ENCODE measurements at regions of chr10 and their contacts with region 1.

Region 1: DNA sequence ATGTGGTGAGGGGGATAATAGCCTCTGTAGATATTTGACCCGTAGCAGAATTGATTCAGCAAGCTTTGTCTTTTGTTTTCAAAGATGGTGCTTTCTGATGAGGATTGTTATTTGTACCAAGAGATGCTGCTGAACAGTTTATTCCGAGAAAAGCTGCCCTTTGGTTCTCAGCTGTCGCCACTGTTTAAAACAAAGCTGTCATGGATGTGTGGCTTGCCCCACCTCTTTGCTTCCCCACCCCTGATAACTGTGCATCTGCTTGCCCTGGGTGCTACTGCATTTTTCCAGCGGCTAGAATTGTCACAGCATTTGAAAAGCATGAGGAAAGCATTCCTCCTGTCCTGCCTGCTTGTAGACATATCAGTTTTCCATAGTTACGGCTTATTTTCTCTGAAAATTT is 226.9 kb upstream of the CSTF2T start:
- DNase-seq: no peak
- H3K4me3 ChIP-seq: no peak overlapping the region
- H3K4me3 Mint-ChIP-seq: no peak overlapping the region
- H3K27ac ChIP-seq: no peak overlapping the region
- H3K27ac Mint-ChIP-seq: no peak overlapping the region
- H3K4me1 ChIP-seq: no peaks in the 10 kb centered on the region
- H3K4me1 Mint-ChIP-seq: no peaks in the 10 kb centered on the region
- H3K27me3 ChIP-seq: no peaks in the 10 kb centered on the region
- H3K27me3 Mint-ChIP-seq: no peaks in the 10 kb centered on the region

Region 2: DNA sequence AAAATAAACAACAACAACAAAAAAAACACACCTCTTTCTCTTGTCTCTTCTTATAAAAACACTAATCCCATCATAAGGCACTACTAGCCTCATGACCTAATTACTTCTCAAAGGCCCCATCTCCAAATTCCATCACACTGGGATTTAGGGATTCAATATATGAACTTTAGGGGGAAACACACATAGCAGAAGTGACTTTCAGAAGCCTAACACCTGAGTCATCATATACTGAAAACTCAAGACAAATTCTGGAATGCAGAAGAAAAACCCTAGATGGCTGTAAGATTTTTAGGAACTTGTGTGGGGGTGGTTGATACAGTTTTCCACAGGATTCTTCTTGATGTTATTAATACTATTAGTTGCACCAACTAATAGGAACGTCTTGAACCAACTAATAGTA is 193.3 kb before region 1 on chr10:
- CTCF ChIA-PET with region 1: no interaction called
- POLR2A ChIA-PET with region 1: interaction called, 13 read pairs
- DNase-seq: no peak
- H3K4me3 ChIP-seq: no peak overlapping the region
- H3K4me3 Mint-ChIP-seq: no peak overlapping the region
- H3K27ac ChIP-seq: no peak overlapping the region
- H3K27ac Mint-ChIP-seq: no peak overlapping the region
- H3K4me1 ChIP-seq: no peaks in the 10 kb centered on the region
- H3K4me1 Mint-ChIP-seq: no peaks in the 10 kb centered on the region
- H3K27me3 ChIP-seq: no peaks in the 10 kb centered on the region
- H3K27me3 Mint-ChIP-seq: peaks cover 0 to 8% of the 10 kb centered on the region in 2 donors

Region 3: DNA sequence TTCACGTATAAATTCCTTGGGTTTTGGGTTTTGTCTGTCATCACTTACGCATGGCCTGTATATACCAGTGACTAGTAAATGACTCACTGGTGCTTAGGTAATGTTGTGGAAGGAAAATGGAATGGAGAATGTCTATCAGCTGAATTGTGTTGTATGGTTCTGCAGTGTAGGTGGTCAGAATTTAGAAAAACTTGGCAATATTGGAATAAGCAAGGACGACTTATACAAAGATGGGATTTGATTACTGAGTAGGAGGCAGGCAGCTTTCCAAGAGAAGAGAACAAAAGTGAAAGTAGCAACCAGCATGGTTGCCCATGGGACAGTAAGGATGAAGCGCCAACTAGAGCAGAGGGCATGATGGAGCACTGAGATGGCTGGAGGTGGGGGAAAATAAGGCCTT is 58.4 kb before region 1 on chr10:
- CTCF ChIA-PET with region 1: no interaction called
- POLR2A ChIA-PET with region 1: no interaction called
- DNase-seq: no peak
- H3K4me3 ChIP-seq: no peak overlapping the region
- H3K4me3 Mint-ChIP-seq: no peak overlapping the region
- H3K27ac ChIP-seq: no peak overlapping the region
- H3K27ac Mint-ChIP-seq: no peak overlapping the region
- H3K4me1 ChIP-seq: no peaks in the 10 kb centered on the region
- H3K4me1 Mint-ChIP-seq: no peaks in the 10 kb centered on the region
- H3K27me3 ChIP-seq: no peaks in the 10 kb centered on the region
- H3K27me3 Mint-ChIP-seq: no peaks in the 10 kb centered on the region

Region 4: DNA sequence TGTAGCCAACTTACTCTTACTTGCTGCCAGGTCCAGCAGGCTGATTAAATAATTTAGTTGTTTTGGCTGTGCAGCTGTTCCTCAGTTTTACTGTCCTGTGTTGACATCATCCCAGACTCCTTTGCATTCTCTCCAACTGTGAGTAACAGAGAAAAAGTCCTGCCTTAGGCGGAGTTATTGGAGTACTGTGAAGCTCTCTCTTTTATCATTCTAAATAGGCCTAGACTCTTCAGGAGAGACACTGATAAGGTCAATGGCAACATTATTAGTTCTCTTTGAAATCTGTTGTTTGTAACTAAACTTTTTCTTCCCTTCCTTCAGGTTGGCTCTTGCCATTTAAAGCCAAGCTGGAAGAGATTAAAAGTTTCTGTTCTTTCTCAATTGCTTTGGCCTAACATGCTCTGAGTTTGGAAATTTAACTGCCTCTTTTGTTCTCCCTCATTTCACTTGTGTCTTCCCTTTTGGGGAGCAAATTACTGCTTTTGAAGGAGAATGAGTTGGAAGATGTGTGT is 11.2 kb before region 1 on chr10:
- CTCF ChIA-PET with region 1: no interaction called
- POLR2A ChIA-PET with region 1: no interaction called
- DNase-seq: no peak
- H3K4me3 ChIP-seq: no peak overlapping the region
- H3K4me3 Mint-ChIP-seq: no peak overlapping the region
- H3K27ac ChIP-seq: no peak overlapping the region
- H3K27ac Mint-ChIP-seq: no peak overlapping the region
- H3K4me1 ChIP-seq: no peaks in the 10 kb centered on the region
- H3K4me1 Mint-ChIP-seq: no peaks in the 10 kb centered on the region
- H3K27me3 ChIP-seq: no peaks in the 10 kb centered on the region
- H3K27me3 Mint-ChIP-seq: no peaks in the 10 kb centered on the region